ENCODE measurements at regions of chr20 and their contacts with region 1.

Region 1: DNA sequence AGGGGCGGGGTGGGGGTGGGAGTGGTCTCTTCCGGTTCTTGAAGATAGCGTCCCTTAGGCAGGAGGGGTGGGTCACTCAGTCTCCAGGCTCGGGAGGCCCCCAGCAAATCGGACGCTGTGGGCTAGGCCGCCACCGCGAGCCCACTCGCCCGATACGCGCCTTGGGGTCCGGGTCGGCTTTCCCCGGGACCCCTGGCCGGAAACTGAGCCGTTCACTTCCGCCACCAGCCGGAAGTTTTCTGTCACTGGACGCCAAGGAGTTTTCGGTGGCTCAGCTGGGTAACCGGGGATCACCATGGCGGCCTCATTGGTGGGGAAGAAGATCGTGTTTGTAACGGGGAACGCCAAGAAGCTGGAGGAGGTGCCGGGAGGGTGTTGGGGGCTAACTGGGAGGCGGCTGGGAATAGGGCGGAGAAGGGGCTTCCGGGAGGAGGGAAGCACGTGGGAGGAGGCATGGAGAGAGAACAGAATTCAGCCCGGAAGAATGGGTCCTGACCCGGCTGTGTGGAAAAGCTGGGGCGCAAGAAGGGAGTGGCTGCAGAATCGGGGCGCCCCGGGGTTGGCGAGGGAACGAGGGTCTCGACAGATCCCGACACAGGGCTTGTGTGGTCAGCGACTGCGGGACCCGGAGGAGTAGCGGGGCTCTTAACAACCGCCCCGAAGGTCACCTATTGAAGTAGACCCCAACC is at the start of gene ITPA:
- DNase-seq: peak; percentile 45
- H3K4me3 ChIP-seq: peak within 1 kb of the TSS; percentile 63 to 94 (median 90)
- H3K27ac ChIP-seq: peak within 1 kb of the TSS; percentile 62
- H3K4me1 ChIP-seq: peaks cover 11% of the 10 kb centered on the region
- H3K27me3 ChIP-seq: no peaks in the 10 kb centered on the region
- CTCF ChIP-seq: no peak
- total RNA-seq, gene ITPA: 29.2 to 68.7 TPM

Region 2: DNA sequence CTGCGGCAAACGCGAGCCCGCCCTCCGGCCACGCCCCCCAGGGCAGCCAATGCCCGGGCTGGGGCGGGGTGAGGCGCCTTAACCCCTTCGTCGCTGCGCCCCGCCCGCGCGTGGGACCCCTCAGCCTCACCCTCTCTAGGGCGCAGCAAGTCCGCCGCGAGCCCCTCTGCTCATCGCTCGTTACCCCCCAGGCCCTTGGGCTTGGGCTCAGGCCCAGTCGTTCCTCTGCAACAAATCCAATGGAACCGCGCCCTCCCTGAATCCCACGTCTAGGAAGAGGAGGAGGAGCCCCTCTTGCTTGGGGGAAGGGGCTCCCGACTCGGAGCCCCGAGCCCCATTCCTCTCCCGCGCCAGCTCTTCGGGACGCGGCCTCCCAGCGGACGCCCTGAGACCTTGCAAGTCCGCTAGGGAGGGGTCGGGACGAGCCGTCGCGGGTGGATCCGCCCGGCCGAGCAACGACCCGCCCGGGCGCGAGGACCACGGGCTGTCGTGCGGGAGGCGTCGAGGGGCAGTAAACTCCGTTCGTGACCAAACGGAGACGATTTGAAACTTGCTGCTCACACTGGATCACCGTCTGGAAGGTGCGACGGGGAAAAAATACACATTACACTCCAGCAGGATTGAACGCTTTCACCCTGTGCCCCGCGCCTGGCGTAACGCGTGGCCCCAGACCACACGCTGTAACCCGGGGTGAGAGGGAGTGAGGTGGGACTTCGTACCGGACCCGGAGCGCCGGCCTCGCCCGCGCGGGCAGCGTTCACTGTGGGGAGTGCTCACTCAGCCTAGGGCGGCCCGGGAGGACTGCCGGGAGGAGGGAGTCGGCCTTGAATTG is 35.6 kb before region 1 on chr20:
- CTCF ChIA-PET with region 1: no interaction called
- dilution Hi-C with region 1: no loop called
- in situ Hi-C with region 1: no loop called
- intact Hi-C with region 1: loop called (anchors 2 kb)
- DNase-seq: peak; percentile 69
- H3K4me3 ChIP-seq: peak overlapping the region; percentile 66 to 96 (median 94)
- H3K27ac ChIP-seq: peak overlapping the region; percentile 31
- H3K4me1 ChIP-seq: peaks cover 18% of the 10 kb centered on the region
- H3K27me3 ChIP-seq: no peaks in the 10 kb centered on the region
- CTCF ChIP-seq: peak in 1 of 2 donors; percentile 36

Measured in mammary epithelial cell (primary cell).